Adrenal gland (tissue), 19 donors: ENCODE measurements at regions of chr17 and their contacts with region 1.

Region 1: GRCh38 chr17:57311281-57312216 is 55.2 kb downstream of the MSI2 start:
- DNase-seq: no peak
- H3K4me3 ChIP-seq: no peak overlapping the region
- H3K27ac ChIP-seq: peak overlapping the region in 3 of 5 donors; percentile 4 to 38 (median 27)
- H3K4me1 ChIP-seq: peaks cover 19 to 68% of the 10 kb centered on the region in 2 donors
- H3K27me3 ChIP-seq: no peaks in the 10 kb centered on the region
- CTCF ChIP-seq: no peak
- POLR2A ChIP-seq: no peak

Region 2: DNA sequence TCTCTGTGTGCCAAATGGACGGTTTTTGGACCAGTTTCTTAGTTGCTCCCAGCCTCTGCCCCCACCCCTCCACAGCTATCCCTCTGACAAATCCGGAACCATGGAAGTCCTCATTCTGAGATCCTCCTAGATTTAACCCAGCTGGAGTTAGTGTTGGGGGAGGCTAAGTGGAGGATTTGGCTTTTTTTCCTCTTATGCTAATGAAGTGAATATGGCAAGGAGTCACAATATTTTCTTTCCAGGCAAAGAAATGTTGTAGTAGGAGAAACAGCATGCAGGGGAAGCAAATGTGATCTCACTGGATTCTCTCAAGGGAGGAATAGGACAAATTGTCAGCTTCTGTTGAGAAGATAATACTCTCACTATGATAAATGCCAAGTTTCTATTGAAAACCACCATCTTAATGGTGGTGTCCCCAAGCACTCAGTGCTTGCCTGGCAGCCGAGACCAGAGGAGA is 104.2 kb after region 1 on chr17:
- intact Hi-C with region 1: loop called in 1 of 2 experiments (anchors 10 kb)
- DNase-seq: no peak
- H3K4me3 ChIP-seq: no peak overlapping the region
- H3K27ac ChIP-seq: peak overlapping the region in 1 of 5 donors; percentile 10
- H3K4me1 ChIP-seq: peaks cover 0 to 8% of the 10 kb centered on the region in 2 donors
- H3K27me3 ChIP-seq: no peaks in the 10 kb centered on the region
- CTCF ChIP-seq: no peak
- POLR2A ChIP-seq: no peak